Mammary epithelial cell (primary cell): ENCODE measurements at regions of chr12 and their contacts with region 1.

Region 1: GRCh38 chr12:122593910-122594309 is 66.9 kb downstream of the KNTC1 start:
- DNase-seq: no peak
- H3K4me3 ChIP-seq: no peak overlapping the region
- H3K27ac ChIP-seq: no peak overlapping the region
- H3K4me1 ChIP-seq: no peaks in the 10 kb centered on the region
- H3K27me3 ChIP-seq: no peaks in the 10 kb centered on the region
- CTCF ChIP-seq: no peak

Region 2: DNA sequence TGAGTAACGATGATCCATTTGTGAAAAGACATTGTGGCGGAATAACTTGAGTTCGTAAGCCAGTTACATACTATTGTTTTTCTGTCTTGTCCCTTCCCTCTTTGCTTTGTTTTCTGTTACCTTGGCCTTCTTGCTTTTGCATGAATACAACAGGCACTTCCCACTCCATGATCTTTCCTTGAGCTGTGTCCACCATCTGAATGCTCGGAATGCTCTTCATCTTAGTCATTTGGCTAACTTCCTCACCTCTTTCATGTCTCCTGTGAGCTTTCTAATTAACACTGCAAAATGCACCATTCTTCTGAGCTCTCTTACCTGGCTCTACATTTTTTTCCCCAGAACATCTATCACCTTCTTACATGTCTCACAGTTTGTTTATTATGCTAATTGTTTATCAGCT is 56.9 kb before region 1 on chr12:
- CTCF ChIA-PET with region 1: no interaction called
- dilution Hi-C with region 1: loop called (anchors 5 kb)
- in situ Hi-C with region 1: no loop called
- intact Hi-C with region 1: no loop called
- DNase-seq: no peak
- H3K4me3 ChIP-seq: no peak overlapping the region
- H3K27ac ChIP-seq: no peak overlapping the region
- H3K4me1 ChIP-seq: no peaks in the 10 kb centered on the region
- H3K27me3 ChIP-seq: no peaks in the 10 kb centered on the region
- CTCF ChIP-seq: no peak